ENCODE measurements at regions of chr3 and their contacts with region 1.

Region 1: GRCh38 chr3:185353823-185354614 is 8.9 kb upstream of the MAP3K13 start:
- DNase-seq: peak; percentile 91
- H3K4me3 ChIP-seq: no peak overlapping the region
- H3K27ac ChIP-seq: no peak overlapping the region
- H3K4me1 ChIP-seq: no peaks in the 10 kb centered on the region
- H3K27me3 ChIP-seq: no peaks in the 10 kb centered on the region
- CTCF ChIP-seq: peak; percentile 71

Region 2: GRCh38 chr3:185316738-185317407 is 37.1 kb before region 1 on chr3:
- CTCF ChIA-PET with region 1: no interaction called
- POLR2A ChIA-PET with region 1: interaction called, 18 read pairs
- intact Hi-C with region 1: no loop called
- DNase-seq: peak; percentile 10
- H3K4me3 ChIP-seq: no peak overlapping the region
- H3K27ac ChIP-seq: no peak overlapping the region
- H3K4me1 ChIP-seq: no peaks in the 10 kb centered on the region
- H3K27me3 ChIP-seq: no peaks in the 10 kb centered on the region
- CTCF ChIP-seq: no peak

Region 3: DNA sequence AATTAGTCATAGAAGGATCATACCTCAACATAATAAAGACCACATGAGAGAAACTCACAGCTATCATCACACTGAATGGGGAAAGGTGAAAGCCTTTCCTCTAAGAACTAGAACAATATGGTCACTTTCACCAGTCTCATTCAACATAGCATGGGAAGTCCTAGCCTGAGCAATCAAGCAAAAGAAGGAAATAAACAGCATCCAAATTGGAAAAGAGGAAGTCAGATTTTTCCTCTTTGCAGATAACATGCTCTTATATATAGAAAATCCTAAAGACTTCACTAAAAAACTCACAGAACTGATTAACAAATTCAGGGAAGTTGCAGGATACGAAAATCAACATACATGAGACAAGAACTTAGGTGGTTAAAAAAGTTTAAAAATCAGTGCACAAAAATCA is 33.6 kb after region 1 on chr3:
- CTCF ChIA-PET with region 1: no interaction called
- POLR2A ChIA-PET with region 1: no interaction called
- intact Hi-C with region 1: no loop called
- DNase-seq: no peak
- H3K4me3 ChIP-seq: no peak overlapping the region
- H3K27ac ChIP-seq: no peak overlapping the region
- H3K4me1 ChIP-seq: no peaks in the 10 kb centered on the region
- H3K27me3 ChIP-seq: no peaks in the 10 kb centered on the region
- CTCF ChIP-seq: no peak

Region 4: DNA sequence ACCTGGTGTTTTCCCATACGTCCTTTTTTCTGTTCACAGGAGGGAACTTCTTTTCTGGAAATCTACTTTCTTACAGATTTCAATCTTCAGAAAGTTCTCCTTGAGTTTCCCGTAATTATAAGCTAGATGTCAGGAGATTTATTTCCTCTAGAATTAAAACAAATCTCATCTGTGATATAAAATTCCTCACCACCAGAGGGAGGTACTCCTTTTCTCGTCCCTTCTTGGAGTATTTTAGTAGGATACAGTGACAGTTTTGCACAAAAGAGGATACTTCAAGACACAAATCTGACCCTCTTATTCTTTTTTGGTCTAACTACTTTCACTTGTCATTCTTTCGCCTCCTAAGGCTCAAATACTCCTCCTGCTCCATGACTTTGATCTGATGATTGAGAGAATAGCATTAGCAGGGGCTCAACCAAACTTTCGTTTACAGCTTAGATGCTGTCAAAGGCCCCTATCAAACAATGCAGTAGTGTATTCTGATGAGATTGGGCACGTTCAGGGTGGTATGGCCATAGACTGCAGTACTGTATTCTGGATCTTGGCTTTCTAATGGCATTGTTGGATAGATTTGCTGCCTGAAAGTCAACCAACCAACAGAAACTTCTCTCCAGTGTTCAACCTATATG is 106.8 kb after region 1 on chr3:
- CTCF ChIA-PET with region 1: no interaction called
- POLR2A ChIA-PET with region 1: no interaction called
- intact Hi-C with region 1: no loop called
- DNase-seq: peak; percentile 56
- H3K4me3 ChIP-seq: no peak overlapping the region
- H3K27ac ChIP-seq: no peak overlapping the region
- H3K4me1 ChIP-seq: no peaks in the 10 kb centered on the region
- H3K27me3 ChIP-seq: no peaks in the 10 kb centered on the region
- CTCF ChIP-seq: peak; percentile 67

Region 5: GRCh38 chr3:185582866-185583265 is 228.8 kb after region 1 on chr3:
- CTCF ChIA-PET with region 1: no interaction called
- POLR2A ChIA-PET with region 1: no interaction called
- intact Hi-C with region 1: loop called (anchors 5 kb)
- DNase-seq: peak; percentile 30
- H3K4me3 ChIP-seq: no peak overlapping the region
- H3K27ac ChIP-seq: no peak overlapping the region
- H3K4me1 ChIP-seq: peaks cover 13% of the 10 kb centered on the region
- H3K27me3 ChIP-seq: no peaks in the 10 kb centered on the region
- CTCF ChIP-seq: no peak

Region 6: GRCh38 chr3:185630182-185630622 is 276.2 kb after region 1 on chr3:
- CTCF ChIA-PET with region 1: no interaction called
- POLR2A ChIA-PET with region 1: no interaction called
- intact Hi-C with region 1: no loop called
- DNase-seq: peak; percentile 40
- H3K4me3 ChIP-seq: no peak overlapping the region
- H3K27ac ChIP-seq: peak overlapping the region; percentile 43
- H3K4me1 ChIP-seq: peaks cover 9% of the 10 kb centered on the region
- H3K27me3 ChIP-seq: no peaks in the 10 kb centered on the region
- CTCF ChIP-seq: no peak